ENCODE measurements at regions of chr15 and their contacts with region 1.

Region 1: DNA sequence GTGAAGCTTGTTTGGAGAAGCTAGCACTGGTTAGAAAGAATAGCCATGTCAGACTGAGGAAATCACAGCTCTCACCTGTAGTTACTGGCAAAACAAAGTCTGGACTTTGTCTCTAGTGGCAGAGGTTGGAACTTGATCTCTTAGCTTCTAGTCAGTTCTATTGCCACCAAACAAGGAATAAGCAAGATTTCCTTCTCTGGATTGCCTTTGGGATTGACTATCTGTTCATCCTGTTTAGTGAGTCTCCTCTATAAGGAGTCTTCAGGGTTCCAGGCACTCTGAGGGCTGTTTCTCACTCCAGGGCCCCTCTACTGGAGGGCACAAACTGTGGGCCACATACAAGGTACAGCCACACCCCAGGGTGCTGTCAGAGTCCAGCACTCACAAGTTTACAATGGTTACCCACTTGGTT is 426.6 kb upstream of the THBS1 start:
- DNase-seq: peak in 1 of 2 experiments; percentile 39
- H3K4me3 ChIP-seq: no peak overlapping the region
- H3K4me3 Mint-ChIP-seq: no peak overlapping the region
- H3K27ac Mint-ChIP-seq: peak overlapping the region; percentile 46
- H3K4me1 ChIP-seq: peaks cover 20% of the 10 kb centered on the region
- H3K4me1 Mint-ChIP-seq: peaks cover 6% of the 10 kb centered on the region
- H3K27me3 ChIP-seq: no peaks in the 10 kb centered on the region
- H3K27me3 Mint-ChIP-seq: no peaks in the 10 kb centered on the region
- CTCF ChIP-seq: peak; percentile 34 to 38

Region 2: GRCh38 chr15:38699633-38700230 is 454.5 kb before region 1 on chr15:
- CTCF ChIA-PET with region 1: no interaction called
- POLR2A ChIA-PET with region 1: no interaction called
- intact Hi-C with region 1: loop called (anchors 10 kb)
- DNase-seq: peak; percentile 62 to 64
- H3K4me3 ChIP-seq: no peak overlapping the region
- H3K4me3 Mint-ChIP-seq: no peak overlapping the region
- H3K27ac Mint-ChIP-seq: no peak overlapping the region
- H3K4me1 ChIP-seq: peaks cover 23% of the 10 kb centered on the region
- H3K4me1 Mint-ChIP-seq: peaks cover 31% of the 10 kb centered on the region
- H3K27me3 ChIP-seq: no peaks in the 10 kb centered on the region
- H3K27me3 Mint-ChIP-seq: no peaks in the 10 kb centered on the region
- CTCF ChIP-seq: peak; percentile 71 to 72

Region 3: DNA sequence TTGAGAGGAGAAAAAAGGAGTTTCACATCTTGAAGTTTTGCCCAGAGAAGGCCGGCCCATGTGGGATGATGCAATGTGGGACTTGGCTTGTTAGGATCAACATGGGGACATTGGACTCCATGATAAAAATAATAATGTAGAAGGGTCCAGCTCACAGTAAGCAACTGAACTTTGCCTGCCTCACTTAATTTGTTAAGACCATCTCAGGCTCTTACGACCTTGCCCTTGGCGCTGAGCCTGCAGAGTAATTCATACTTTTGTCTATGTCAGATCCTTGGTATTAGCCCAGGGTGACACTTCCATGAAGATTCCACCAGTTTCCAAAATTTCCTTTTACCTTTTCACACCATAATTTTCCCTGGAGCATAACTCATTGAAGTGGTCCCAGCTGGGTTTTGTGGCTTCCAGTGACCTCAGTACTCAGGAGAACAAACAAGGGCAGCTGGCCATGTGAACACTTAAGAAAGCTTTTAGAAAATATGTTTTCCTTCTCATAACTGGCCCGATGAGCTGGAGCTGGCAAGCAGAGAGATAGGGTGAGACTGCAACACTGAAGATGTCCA is 274.2 kb before region 1 on chr15:
- CTCF ChIA-PET with region 1: no interaction called
- POLR2A ChIA-PET with region 1: no interaction called
- intact Hi-C with region 1: loop called (anchors 10 kb)
- DNase-seq: no peak
- H3K4me3 ChIP-seq: no peak overlapping the region
- H3K4me3 Mint-ChIP-seq: no peak overlapping the region
- H3K27ac Mint-ChIP-seq: no peak overlapping the region
- H3K4me1 ChIP-seq: no peaks in the 10 kb centered on the region
- H3K4me1 Mint-ChIP-seq: peaks cover 7% of the 10 kb centered on the region
- H3K27me3 ChIP-seq: no peaks in the 10 kb centered on the region
- H3K27me3 Mint-ChIP-seq: no peaks in the 10 kb centered on the region
- CTCF ChIP-seq: no peak

Region 4: GRCh38 chr15:39084683-39085530 is 69.3 kb before region 1 on chr15:
- CTCF ChIA-PET with region 1: no interaction called
- POLR2A ChIA-PET with region 1: no interaction called
- intact Hi-C with region 1: loop called (anchors 5 kb)
- DNase-seq: no peak
- H3K4me3 ChIP-seq: no peak overlapping the region
- H3K4me3 Mint-ChIP-seq: no peak overlapping the region
- H3K27ac Mint-ChIP-seq: no peak overlapping the region
- H3K4me1 ChIP-seq: no peaks in the 10 kb centered on the region
- H3K4me1 Mint-ChIP-seq: no peaks in the 10 kb centered on the region
- H3K27me3 ChIP-seq: no peaks in the 10 kb centered on the region
- H3K27me3 Mint-ChIP-seq: no peaks in the 10 kb centered on the region
- CTCF ChIP-seq: no peak

Measured in Caco-2 (cell line).